Activated T-helper 2 cell treated with anti-CD3 and anti-CD28 coated beads, Interferon-gamma antibody, Interleukin-2, Interleukin-4, amounts not matched to agents 10 μg/mL and 5 μg/mL and 100 μg/mL, durations not matched to agents 14 hours and 24 hours and 36 hours (primary cell): ENCODE measurements at regions of chr21 and their contacts with region 1.

Region 1: DNA sequence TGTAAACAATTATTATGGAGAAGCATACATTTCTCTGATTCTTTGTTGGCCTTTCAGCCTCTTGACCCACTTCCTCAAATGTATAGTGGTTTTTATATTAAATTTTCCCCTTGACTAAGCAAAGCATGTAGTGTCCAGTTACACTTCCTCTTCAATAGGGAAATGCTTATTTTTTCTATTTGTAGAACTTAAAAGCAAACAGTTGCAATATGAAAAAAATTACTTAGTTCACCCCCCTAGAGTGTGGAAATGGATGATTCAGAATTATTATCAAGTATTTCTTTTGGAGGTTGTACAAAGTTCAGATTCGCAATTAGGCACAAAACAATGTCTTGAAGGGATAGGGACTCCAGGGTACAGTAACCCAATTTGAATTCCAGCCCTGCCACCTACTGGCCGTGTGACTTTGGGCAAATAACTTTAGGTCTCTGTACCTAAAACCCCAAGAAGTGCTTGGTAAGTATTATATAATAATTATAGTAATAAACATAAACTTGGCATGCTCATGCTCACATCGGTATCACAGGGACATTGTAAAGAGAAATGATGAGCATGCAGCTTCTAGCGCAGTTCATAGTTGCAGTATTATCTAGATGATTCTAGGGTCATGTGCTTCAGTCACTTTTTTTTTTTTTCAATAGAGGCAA is 28.6 kb upstream of the IFNGR2 start:
- DNase-seq: peak; percentile 29
- H3K4me3 Mint-ChIP-seq: no peak overlapping the region
- H3K27ac Mint-ChIP-seq: no peak overlapping the region
- H3K4me1 Mint-ChIP-seq: peaks cover 9% of the 10 kb centered on the region
- H3K27me3 Mint-ChIP-seq: peaks cover 12% of the 10 kb centered on the region

Region 2: GRCh38 chr21:33127154-33127893 is 247.2 kb before region 1 on chr21:
- intact Hi-C with region 1: loop called (anchors 5 kb)
- DNase-seq: peak; percentile 33
- H3K4me3 Mint-ChIP-seq: peak overlapping the region; percentile 38
- H3K27ac Mint-ChIP-seq: no peak overlapping the region
- H3K4me1 Mint-ChIP-seq: no peaks in the 10 kb centered on the region
- H3K27me3 Mint-ChIP-seq: peaks cover 34% of the 10 kb centered on the region

Region 3: DNA sequence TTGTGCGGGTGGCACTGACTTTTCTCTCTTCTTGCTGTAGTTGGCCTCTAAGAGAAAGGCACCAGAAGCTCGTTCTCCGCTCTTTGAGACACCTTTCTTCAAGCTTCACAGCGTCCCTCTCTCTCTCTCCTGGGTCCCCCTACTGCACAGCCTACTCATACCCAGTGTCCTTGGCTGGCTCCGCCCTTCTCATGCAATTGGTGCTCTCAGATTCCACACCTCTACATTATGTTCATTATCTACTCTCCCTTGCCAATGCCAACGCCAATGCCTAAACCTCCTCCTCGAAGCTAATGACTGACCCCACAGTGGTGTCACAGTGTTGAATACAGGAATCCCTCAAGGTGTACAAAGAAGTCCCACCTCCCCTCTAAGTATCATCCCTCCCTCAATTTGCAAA is 121.8 kb after region 1 on chr21:
- intact Hi-C with region 1: no loop called
- DNase-seq: no peak
- H3K4me3 Mint-ChIP-seq: no peak overlapping the region
- H3K27ac Mint-ChIP-seq: no peak overlapping the region
- H3K4me1 Mint-ChIP-seq: peaks cover 4% of the 10 kb centered on the region
- H3K27me3 Mint-ChIP-seq: peaks cover 6% of the 10 kb centered on the region